Activated naive CD4-positive, alpha-beta T cell treated with anti-CD3 and anti-CD28 coated beads, Interleukin-2, amount 10 ng/mL, durations not matched to agents 7 days and 5 days (primary cell): ENCODE measurements at regions of chr15 and their contacts with region 1.

Region 1: GRCh38 chr15:45611305-45611704 is 23.5 kb upstream of the SQOR start:
- DNase-seq: no peak
- H3K4me3 Mint-ChIP-seq: no peak overlapping the region
- H3K27ac Mint-ChIP-seq: no peak overlapping the region
- H3K4me1 Mint-ChIP-seq: peaks cover 9% of the 10 kb centered on the region
- H3K27me3 Mint-ChIP-seq: no peaks in the 10 kb centered on the region

Region 2: DNA sequence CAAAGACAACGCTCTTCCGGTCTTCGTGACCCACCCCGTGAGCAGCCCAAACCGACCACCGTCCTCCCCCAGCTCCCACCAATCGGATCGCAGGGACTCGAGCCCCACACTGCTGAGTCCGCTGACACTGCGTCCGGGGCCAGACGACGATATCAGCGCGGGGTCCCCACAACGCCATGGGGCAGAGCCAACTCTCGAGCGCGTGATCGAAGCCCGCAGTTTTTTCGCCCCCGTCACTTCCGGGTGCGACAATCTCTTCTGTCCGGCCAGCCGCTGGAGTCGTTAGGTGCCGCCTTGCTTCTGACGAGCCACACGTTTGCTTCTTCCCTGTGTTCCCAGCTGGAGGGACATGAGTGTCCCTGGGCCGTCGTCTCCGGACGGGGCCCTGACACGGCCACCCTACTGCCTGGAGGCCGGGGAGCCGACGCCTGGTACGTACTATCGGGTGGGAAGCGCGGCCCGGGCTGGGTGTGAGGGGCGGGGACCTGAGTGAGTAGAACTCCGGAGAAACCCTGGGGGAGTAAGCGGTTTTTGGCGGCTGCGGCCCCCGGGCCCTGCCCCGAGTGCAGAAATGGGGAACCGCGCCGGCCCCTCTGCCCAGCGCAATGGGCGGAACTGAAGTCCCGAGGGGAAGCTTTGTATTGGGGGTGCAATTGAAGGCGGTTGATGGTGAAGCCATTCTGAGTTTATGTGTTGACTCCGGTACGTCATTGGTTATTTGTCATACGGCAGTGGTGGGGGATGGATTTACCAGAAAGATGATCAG is 24.0 kb before region 1 on chr15 and contains the start of gene BLOC1S6:
- CTCF ChIA-PET with region 1: interaction called, 34 read pairs
- DNase-seq: peak; percentile 92
- H3K4me3 Mint-ChIP-seq: peak within 1 kb of the TSS; percentile 99
- H3K27ac Mint-ChIP-seq: peak within 1 kb of the TSS; percentile 100
- H3K4me1 Mint-ChIP-seq: peaks cover 43% of the 10 kb centered on the region
- H3K27me3 Mint-ChIP-seq: peaks cover 3% of the 10 kb centered on the region

Region 3: GRCh38 chr15:45634442-45635190 is 23.3 kb after region 1 on chr15 and contains the start of gene SQOR:
- CTCF ChIA-PET with region 1: interaction called, 21 read pairs
- DNase-seq: peak; percentile 81
- H3K4me3 Mint-ChIP-seq: peak within 1 kb of the TSS; percentile 100
- H3K27ac Mint-ChIP-seq: peak within 1 kb of the TSS; percentile 94
- H3K4me1 Mint-ChIP-seq: peaks cover 52% of the 10 kb centered on the region
- H3K27me3 Mint-ChIP-seq: peaks cover 13% of the 10 kb centered on the region